GM18951 (cell line): ENCODE measurements at regions of chr2 and their contacts with region 1.

Region 1: DNA sequence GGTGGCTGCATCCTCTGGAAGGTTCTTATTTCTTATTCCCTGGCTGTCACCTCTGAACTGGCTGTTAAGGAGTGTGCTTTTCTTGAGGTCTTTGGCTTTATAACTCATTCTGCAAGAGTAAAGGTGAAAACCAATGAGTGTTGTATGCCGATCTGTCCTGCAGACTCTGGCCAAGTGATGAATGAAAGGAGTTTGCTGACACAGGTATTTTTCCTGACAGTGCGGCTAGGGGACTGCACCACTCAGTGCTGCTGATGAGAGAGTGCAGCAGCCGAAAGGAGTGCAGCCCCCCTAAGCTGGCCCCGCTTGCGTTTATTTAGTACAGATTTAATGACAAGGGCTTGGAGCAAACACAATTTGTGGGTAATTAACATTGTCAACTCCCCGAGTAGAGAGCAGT is 41.8 kb downstream of the RAB6D start:
- POLR2A ChIP-seq: no peak

Region 2: DNA sequence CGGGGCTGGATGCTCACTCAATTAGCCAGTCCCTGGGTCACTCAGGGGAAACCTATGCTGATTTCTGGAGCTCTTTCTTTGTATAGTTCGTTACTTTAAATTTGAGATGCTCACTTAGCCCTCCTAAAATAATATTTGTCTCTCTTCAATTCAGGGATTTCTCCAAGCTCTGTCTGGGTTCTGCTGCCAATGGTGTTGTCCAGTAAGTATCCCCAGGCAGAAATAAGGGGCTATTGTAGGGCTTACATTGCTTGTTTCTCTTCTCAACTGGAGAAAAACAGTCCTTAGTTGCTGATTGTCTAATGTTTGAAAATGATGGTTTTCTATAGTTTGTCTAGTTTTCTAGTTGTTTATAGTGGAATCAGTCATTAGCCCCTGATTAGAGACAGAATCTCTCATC is 1337.8 kb before region 1 on chr2:
- in situ Hi-C with region 1: no loop called
- POLR2A ChIP-seq: no peak

Region 3: DNA sequence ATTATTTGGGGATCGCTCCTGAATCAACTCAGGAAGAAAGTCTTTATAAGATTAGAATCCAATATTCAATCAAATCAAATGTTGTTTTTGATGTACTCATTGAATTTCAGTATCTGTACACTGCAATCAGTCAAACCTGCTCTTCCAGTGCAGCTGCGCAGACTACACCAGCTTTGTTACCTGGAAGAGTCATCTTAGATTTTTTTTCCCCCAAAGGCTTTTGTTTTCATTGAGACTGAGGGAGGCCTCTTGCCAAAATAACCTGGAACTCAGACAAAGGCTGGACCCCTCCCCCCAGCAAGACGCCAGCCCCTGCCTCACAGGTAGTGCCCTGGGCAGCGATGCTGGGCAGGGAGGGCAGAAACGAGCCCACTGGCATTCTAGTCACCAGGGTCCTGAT is 410.7 kb before region 1 on chr2:
- in situ Hi-C with region 1: no loop called
- POLR2A ChIP-seq: no peak

Region 4: DNA sequence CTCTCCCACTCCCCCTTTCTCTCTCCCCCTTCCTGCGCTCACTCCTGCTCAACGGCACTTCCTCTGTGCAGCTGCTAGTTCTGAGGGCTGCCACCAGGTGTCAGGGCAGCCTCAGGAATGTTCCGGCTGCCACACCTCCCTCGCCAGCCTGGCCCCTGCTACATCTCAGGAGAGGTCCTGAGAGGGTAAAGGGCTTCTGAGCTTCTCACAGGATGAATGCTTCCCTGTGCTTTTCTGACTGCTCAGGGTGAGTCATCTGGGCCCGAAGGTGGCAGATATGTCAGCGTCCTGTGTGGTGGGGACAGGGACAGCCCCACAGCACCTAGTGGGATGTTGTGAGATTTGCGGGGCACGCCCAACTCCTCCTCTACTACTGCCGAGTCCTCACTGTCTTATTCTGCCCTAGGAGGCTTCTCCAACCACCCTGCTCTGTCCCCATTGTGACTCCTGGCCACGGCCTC is 168.1 kb before region 1 on chr2:
- in situ Hi-C with region 1: loop called (anchors 25 kb)
- POLR2A ChIP-seq: no peak